ENCODE measurements at regions of chr2 and their contacts with region 1.

Region 1: GRCh38 chr2:219543601-219544358 is at the starts of genes CHPF and TMEM198:
- DNase-seq: peak; percentile 96 to 98
- ATAC-seq: peak; percentile 87 to 90
- H3K4me3 ChIP-seq: peak within 1 kb of the TSS; percentile 63 to 79 (median 74)
- H3K27ac ChIP-seq: peak within 1 kb of the TSS; percentile 75 to 96 (median 88)
- H3K4me1 ChIP-seq: peaks cover 18 to 23% of the 10 kb centered on the region in 2 donors
- H3K27me3 ChIP-seq: no peaks in the 10 kb centered on the region
- CTCF ChIP-seq: no peak
- POLR2A ChIP-seq: peak; percentile 71 to 89
- total RNA-seq, gene CHPF: 21.0 to 50.5 (median 37.2) TPM
- total RNA-seq, gene TMEM198: 0.87 to 6.7 (median 3.3) TPM

Region 2: GRCh38 chr2:219571311-219572236 is 27.8 kb after region 1 on chr2 and contains the start of gene OBSL1:
- in situ Hi-C with region 1: no loop called
- intact Hi-C with region 1: loop called (anchors 2 kb)
- DNase-seq: peak; percentile 69 to 89
- ATAC-seq: peak; percentile 80
- H3K4me3 ChIP-seq: peak within 1 kb of the TSS; percentile 56 to 73 (median 63)
- H3K27ac ChIP-seq: peak within 1 kb of the TSS; percentile 79 to 90 (median 86)
- H3K4me1 ChIP-seq: peaks cover 11 to 14% of the 10 kb centered on the region in 2 donors
- H3K27me3 ChIP-seq: no peaks in the 10 kb centered on the region
- CTCF ChIP-seq: no peak
- POLR2A ChIP-seq: peak; percentile 24 to 70
- total RNA-seq, gene OBSL1: 47.9 to 72.9 (median 56.5) TPM

Region 3: GRCh38 chr2:219642465-219643080 is 98.8 kb after region 1 on chr2:
- in situ Hi-C with region 1: loop called in 1 of 4 experiments (anchors 10 kb)
- intact Hi-C with region 1: loop called (anchors 1 kb)
- DNase-seq: peak; percentile 92 to 94
- ATAC-seq: peak; percentile 84 to 86
- H3K4me3 ChIP-seq: no peak overlapping the region
- H3K27ac ChIP-seq: no peak overlapping the region
- H3K4me1 ChIP-seq: peaks cover 27 to 40% of the 10 kb centered on the region in 2 donors
- H3K27me3 ChIP-seq: no peaks in the 10 kb centered on the region
- CTCF ChIP-seq: peak; percentile 96 to 100 (median 99)
- POLR2A ChIP-seq: no peak

Region 4: GRCh38 chr2:220154304-220154703 is 610.5 kb after region 1 on chr2:
- in situ Hi-C with region 1: no loop called
- intact Hi-C with region 1: no loop called
- DNase-seq: no peak
- ATAC-seq: no peak
- H3K4me3 ChIP-seq: no peak overlapping the region
- H3K27ac ChIP-seq: no peak overlapping the region
- H3K4me1 ChIP-seq: no peaks in the 10 kb centered on the region
- H3K27me3 ChIP-seq: no peaks in the 10 kb centered on the region
- CTCF ChIP-seq: no peak
- POLR2A ChIP-seq: no peak